ENCODE measurements at regions of chr3 and their contacts with region 1.

Region 1: GRCh38 chr3:112979240-112979832 is 4.4 kb upstream of the CD200R1 start:
- DNase-seq: peak in 7 of 9 donors; percentile 32 to 67 (median 62)
- ATAC-seq: peak; percentile 52
- H3K4me3 ChIP-seq: no peak overlapping the region
- H3K4me3 Mint-ChIP-seq: peak overlapping the region in 6 of 10 donors; percentile 0 to 59 (median 28)
- H3K27ac ChIP-seq: no peak overlapping the region
- H3K27ac Mint-ChIP-seq: peak overlapping the region in 7 of 9 donors; percentile 4 to 65 (median 38)
- H3K4me1 ChIP-seq: peaks cover 35 to 57% of the 10 kb centered on the region in 2 donors
- H3K4me1 Mint-ChIP-seq: peaks cover 45 to 73% (median 64%) of the 10 kb centered on the region in 7 donors
- H3K27me3 ChIP-seq: no peaks in the 10 kb centered on the region
- H3K27me3 Mint-ChIP-seq: peaks cover 0 to 3% (median 0%) of the 10 kb centered on the region in 5 donors

Region 2: DNA sequence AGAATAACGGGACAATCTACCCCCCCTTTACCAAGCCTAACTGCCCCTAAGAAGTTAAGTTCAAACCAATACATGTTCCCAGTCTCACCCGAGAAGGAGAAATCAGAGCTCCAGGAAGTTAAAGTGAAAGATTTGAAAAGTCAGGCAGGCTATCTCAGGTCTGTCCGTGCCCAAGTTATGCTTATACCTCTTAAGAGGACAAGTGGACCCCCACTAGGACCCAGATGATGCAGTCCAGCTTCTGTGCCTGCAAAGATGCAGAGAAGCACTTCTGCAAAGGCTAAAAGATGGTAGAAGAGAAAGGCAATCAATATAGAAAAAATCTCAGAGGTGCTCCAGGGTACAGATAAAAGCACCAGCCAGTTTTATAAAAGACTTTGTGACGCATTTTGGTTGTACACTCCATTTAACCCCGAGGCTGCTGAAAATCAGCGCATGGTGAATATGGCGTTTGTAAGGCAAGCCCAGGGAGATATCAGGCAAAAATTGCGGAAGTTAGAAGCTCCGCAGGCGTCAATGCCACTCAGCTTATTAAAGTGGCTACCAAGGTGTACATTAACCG is 675.5 kb before region 1 on chr3:
- CTCF ChIA-PET with region 1: no interaction called
- POLR2A ChIA-PET with region 1: no interaction called
- intact Hi-C with region 1: loop called in 1 of 2 experiments (anchors 10 kb)
- DNase-seq: peak in 7 of 9 donors; percentile 34 to 59 (median 43)
- ATAC-seq: peak; percentile 75
- H3K4me3 ChIP-seq: peak overlapping the region; percentile 82
- H3K4me3 Mint-ChIP-seq: no peak overlapping the region
- H3K27ac ChIP-seq: peak overlapping the region; percentile 61
- H3K27ac Mint-ChIP-seq: no peak overlapping the region
- H3K4me1 ChIP-seq: peaks cover 5 to 18% of the 10 kb centered on the region in 2 donors
- H3K4me1 Mint-ChIP-seq: peaks cover 0 to 3% (median under 1%) of the 10 kb centered on the region in 7 donors
- H3K27me3 ChIP-seq: no peaks in the 10 kb centered on the region
- H3K27me3 Mint-ChIP-seq: no peaks in the 10 kb centered on the region

Region 3: DNA sequence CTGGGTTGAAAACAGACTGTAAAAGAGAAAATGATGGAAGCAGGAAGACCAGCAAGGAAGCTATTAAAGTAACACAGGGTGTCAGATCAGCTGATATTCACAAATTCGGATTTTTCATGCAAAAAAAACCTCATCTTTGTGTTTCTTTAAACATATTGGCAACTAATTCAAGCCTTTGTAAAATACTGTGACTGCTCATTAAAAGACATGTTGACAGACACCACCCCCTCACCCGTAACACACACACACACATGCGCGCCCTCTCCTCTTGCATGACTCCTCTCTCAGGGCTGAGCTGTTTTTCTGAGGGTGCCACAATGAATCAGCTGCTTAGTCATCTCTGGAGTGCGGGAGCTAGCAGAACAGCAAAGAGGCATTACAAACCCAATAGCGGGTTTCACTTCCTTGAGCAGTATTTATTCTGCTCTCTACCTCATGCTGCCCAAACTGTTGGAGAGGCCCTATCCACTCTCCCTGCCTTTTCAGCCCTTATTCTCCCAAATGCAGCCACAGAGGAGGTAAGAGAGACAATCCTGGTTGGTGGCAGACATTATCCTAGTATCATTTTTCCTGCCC is 302.6 kb before region 1 on chr3:
- CTCF ChIA-PET with region 1: no interaction called
- POLR2A ChIA-PET with region 1: no interaction called
- intact Hi-C with region 1: loop called in 1 of 2 experiments (anchors 10 kb)
- DNase-seq: peak in 7 of 9 donors; percentile 5 to 76 (median 30)
- ATAC-seq: peak; percentile 94
- H3K4me3 ChIP-seq: no peak overlapping the region
- H3K4me3 Mint-ChIP-seq: peak overlapping the region in 4 of 10 donors; percentile 11 to 80 (median 16)
- H3K27ac ChIP-seq: no peak overlapping the region
- H3K27ac Mint-ChIP-seq: peak overlapping the region in 5 of 9 donors; percentile 20 to 94 (median 24)
- H3K4me1 ChIP-seq: peaks cover 23 to 39% of the 10 kb centered on the region in 2 donors
- H3K4me1 Mint-ChIP-seq: peaks cover 30 to 69% (median 34%) of the 10 kb centered on the region in 7 donors
- H3K27me3 ChIP-seq: no peaks in the 10 kb centered on the region
- H3K27me3 Mint-ChIP-seq: no peaks in the 10 kb centered on the region

Region 4: GRCh38 chr3:112847692-112848091 is 131.6 kb before region 1 on chr3:
- CTCF ChIA-PET with region 1: interaction called, 3 read pairs
- POLR2A ChIA-PET with region 1: no interaction called
- intact Hi-C with region 1: loop called in 1 of 2 experiments (anchors 10 kb)
- DNase-seq: peak in 5 of 9 donors; percentile 6 to 48 (median 25)
- ATAC-seq: peak; percentile 78
- H3K4me3 ChIP-seq: no peak overlapping the region
- H3K4me3 Mint-ChIP-seq: peak overlapping the region; percentile 0 to 74 (median 31)
- H3K27ac ChIP-seq: no peak overlapping the region
- H3K27ac Mint-ChIP-seq: peak overlapping the region; percentile 1 to 87 (median 53)
- H3K4me1 ChIP-seq: peaks cover 0 to 20% of the 10 kb centered on the region in 2 donors
- H3K4me1 Mint-ChIP-seq: peaks cover 16 to 24% (median 22%) of the 10 kb centered on the region in 7 donors
- H3K27me3 ChIP-seq: no peaks in the 10 kb centered on the region
- H3K27me3 Mint-ChIP-seq: peaks cover 0 to 2% (median 0%) of the 10 kb centered on the region in 5 donors

Region 5: GRCh38 chr3:113002679-113003078 is 23.3 kb after region 1 on chr3:
- CTCF ChIA-PET with region 1: interaction called, 12 read pairs
- POLR2A ChIA-PET with region 1: interaction called, 9 read pairs
- intact Hi-C with region 1: loop called in 1 of 2 experiments (anchors 1 kb)
- DNase-seq: peak in 7 of 9 donors; percentile 27 to 53 (median 41)
- ATAC-seq: peak; percentile 50
- H3K4me3 ChIP-seq: no peak overlapping the region
- H3K4me3 Mint-ChIP-seq: peak overlapping the region in 8 of 10 donors; percentile 19 to 70 (median 48)
- H3K27ac ChIP-seq: peak overlapping the region; percentile 78
- H3K27ac Mint-ChIP-seq: peak overlapping the region; percentile 74 to 98 (median 89)
- H3K4me1 ChIP-seq: peaks cover 22 to 61% of the 10 kb centered on the region in 2 donors
- H3K4me1 Mint-ChIP-seq: peaks cover 33 to 99% (median 91%) of the 10 kb centered on the region in 7 donors
- H3K27me3 ChIP-seq: no peaks in the 10 kb centered on the region
- H3K27me3 Mint-ChIP-seq: no peaks in the 10 kb centered on the region

Region 6: DNA sequence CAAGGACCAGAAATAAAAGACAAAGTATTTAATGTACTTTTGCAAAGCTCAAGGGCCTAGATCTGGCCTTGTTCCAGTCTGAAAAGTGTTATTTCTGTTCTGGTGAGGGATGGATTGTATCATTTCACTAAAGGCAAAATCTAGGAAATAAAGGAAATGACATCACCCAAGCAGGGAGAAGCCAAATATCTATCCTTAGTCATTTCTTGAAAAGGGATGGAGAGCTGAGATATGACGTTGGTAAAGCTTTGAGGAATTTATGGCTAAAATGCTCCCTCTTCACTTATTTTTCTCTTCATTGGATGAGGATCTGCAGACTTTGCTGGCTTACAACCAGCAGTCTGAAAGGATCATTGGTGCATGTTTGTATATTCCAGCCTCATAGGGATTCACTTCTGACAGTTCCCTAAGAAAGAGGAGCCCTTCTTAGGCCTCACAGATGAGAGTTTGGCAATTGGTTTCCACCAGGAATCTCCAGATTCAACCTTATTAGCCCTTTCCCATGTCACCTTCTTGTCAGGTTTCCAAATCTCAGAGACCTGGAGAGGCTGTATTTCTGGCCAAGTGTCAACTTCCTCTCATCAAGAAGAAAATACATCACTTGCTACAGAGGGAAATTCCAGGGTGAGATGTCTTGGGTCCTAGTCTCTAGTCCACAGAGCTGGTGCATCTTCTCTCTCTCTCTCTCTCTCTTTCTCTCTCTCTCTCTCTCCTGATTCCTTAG is 138.3 kb after region 1 on chr3:
- CTCF ChIA-PET with region 1: no interaction called
- POLR2A ChIA-PET with region 1: no interaction called
- intact Hi-C with region 1: no loop called
- DNase-seq: no peak
- ATAC-seq: no peak
- H3K4me3 ChIP-seq: no peak overlapping the region
- H3K4me3 Mint-ChIP-seq: no peak overlapping the region
- H3K27ac ChIP-seq: no peak overlapping the region
- H3K27ac Mint-ChIP-seq: no peak overlapping the region
- H3K4me1 ChIP-seq: no peaks in the 10 kb centered on the region
- H3K4me1 Mint-ChIP-seq: no peaks in the 10 kb centered on the region
- H3K27me3 ChIP-seq: no peaks in the 10 kb centered on the region
- H3K27me3 Mint-ChIP-seq: no peaks in the 10 kb centered on the region

Measured in naive thymus-derived CD4-positive, alpha-beta T cell (primary cell).